Endothelial cell of umbilical vein (primary cell): ENCODE measurements at regions of chr6 and their contacts with region 1.

Region 1: DNA sequence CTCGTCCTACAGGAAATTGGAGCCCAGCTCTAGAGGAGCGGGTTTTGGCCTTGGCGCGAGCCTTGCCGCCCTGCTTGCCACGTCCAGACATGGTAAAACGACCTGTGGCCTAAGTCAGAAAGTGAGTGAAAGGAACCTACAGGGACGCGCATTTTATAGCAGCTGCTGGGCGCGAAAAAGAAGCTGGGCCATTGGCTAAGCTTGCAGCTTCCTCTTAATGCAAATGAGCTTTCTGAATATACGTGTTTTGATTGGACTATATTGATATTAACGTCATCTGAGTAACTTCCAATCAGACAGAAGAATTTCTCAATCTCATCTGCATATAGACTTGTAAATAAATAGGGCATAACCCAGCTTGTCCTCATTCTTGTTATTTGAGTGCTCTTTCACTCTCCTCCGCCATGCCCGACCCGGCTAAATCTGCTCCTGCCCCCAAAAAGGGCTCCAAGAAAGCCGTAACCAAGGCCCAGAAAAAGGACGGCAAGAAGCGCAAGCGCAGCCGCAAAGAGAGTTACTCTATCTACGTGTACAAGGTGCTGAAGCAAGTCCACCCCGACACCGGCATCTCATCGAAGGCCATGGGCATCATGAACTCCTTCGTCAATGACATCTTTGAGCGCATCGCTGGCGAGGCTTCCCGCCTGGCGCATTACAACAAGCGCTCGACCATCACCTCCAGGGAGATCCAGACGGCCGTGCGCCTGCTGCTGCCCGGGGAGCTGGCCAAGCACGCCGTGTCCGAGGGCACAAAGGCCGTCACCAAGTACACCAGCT is 18.9 kb downstream of the OR2B2 start:
- DNase-seq: peak; percentile 98
- H3K4me3 ChIP-seq: peak overlapping the region; percentile 65 to 98 (median 86)
- H3K27ac ChIP-seq: peak overlapping the region; percentile 94
- H3K4me1 ChIP-seq: peaks cover 22% of the 10 kb centered on the region
- H3K27me3 ChIP-seq: no peaks in the 10 kb centered on the region
- CTCF ChIP-seq: no peak
- POLR2A ChIP-seq: peak; percentile 96

Region 2: GRCh38 chr6:27132532-27133280 is 760.5 kb before region 1 on chr6:
- CTCF ChIA-PET with region 1: interaction called, 18 read pairs
- POLR2A ChIA-PET with region 1: interaction called, 11 read pairs
- dilution Hi-C with region 1: no loop called
- intact Hi-C with region 1: loop called (anchors 1 kb)
- DNase-seq: peak; percentile 100
- H3K4me3 ChIP-seq: peak overlapping the region; percentile 37 to 81 (median 59)
- H3K27ac ChIP-seq: peak overlapping the region; percentile 86
- H3K4me1 ChIP-seq: peaks cover 19% of the 10 kb centered on the region
- H3K27me3 ChIP-seq: no peaks in the 10 kb centered on the region
- CTCF ChIP-seq: no peak
- POLR2A ChIP-seq: peak; percentile 76

Region 3: GRCh38 chr6:27188885-27189418 is 704.3 kb before region 1 on chr6:
- CTCF ChIA-PET with region 1: interaction called, 9 read pairs
- POLR2A ChIA-PET with region 1: no interaction called
- dilution Hi-C with region 1: no loop called
- intact Hi-C with region 1: loop called (anchors 1 kb)
- DNase-seq: peak; percentile 83
- H3K4me3 ChIP-seq: peak overlapping the region; percentile 59 to 80 (median 66)
- H3K27ac ChIP-seq: peak overlapping the region; percentile 37
- H3K4me1 ChIP-seq: no peaks in the 10 kb centered on the region
- H3K27me3 ChIP-seq: peaks cover 0 to 4% of the 10 kb centered on the region in 2 experiments
- CTCF ChIP-seq: peak; percentile 54 to 55
- POLR2A ChIP-seq: no peak

Region 4: GRCh38 chr6:27753668-27754407 is 139.4 kb before region 1 on chr6:
- CTCF ChIA-PET with region 1: interaction called, 31 read pairs
- POLR2A ChIA-PET with region 1: interaction called, 5 read pairs
- dilution Hi-C with region 1: no loop called
- intact Hi-C with region 1: loop called (anchors 1 kb)
- DNase-seq: peak; percentile 37
- H3K4me3 ChIP-seq: peak overlapping the region; percentile 31 to 61 (median 38)
- H3K27ac ChIP-seq: no peak overlapping the region
- H3K4me1 ChIP-seq: peaks cover 5% of the 10 kb centered on the region
- H3K27me3 ChIP-seq: peaks cover 35 to 36% of the 10 kb centered on the region in 2 experiments
- CTCF ChIP-seq: no peak
- POLR2A ChIP-seq: no peak

Region 5: GRCh38 chr6:27825025-27825793 is 68.0 kb before region 1 on chr6:
- CTCF ChIA-PET with region 1: interaction called, 117 read pairs
- POLR2A ChIA-PET with region 1: interaction called, 28 read pairs
- dilution Hi-C with region 1: loop called (anchors 5 kb)
- intact Hi-C with region 1: no loop called
- DNase-seq: peak; percentile 49
- H3K4me3 ChIP-seq: peak overlapping the region; percentile 44 to 97 (median 73)
- H3K27ac ChIP-seq: peak overlapping the region; percentile 91
- H3K4me1 ChIP-seq: peaks cover 8% of the 10 kb centered on the region
- H3K27me3 ChIP-seq: no peaks in the 10 kb centered on the region
- CTCF ChIP-seq: no peak
- POLR2A ChIP-seq: no peak

Region 6: GRCh38 chr6:28060405-28060804 is 167.2 kb after region 1 on chr6:
- CTCF ChIA-PET with region 1: no interaction called
- POLR2A ChIA-PET with region 1: no interaction called
- dilution Hi-C with region 1: no loop called
- intact Hi-C with region 1: no loop called
- DNase-seq: no peak
- H3K4me3 ChIP-seq: no peak overlapping the region
- H3K27ac ChIP-seq: no peak overlapping the region
- H3K4me1 ChIP-seq: no peaks in the 10 kb centered on the region
- H3K27me3 ChIP-seq: no peaks in the 10 kb centered on the region
- CTCF ChIP-seq: no peak
- POLR2A ChIP-seq: no peak

Region 7: GRCh38 chr6:28212510-28213212 is 319.4 kb after region 1 on chr6:
- CTCF ChIA-PET with region 1: no interaction called
- POLR2A ChIA-PET with region 1: no interaction called
- dilution Hi-C with region 1: no loop called
- intact Hi-C with region 1: loop called (anchors 2 kb)
- DNase-seq: peak; percentile 90
- H3K4me3 ChIP-seq: peak overlapping the region; percentile 31 to 69 (median 62)
- H3K27ac ChIP-seq: no peak overlapping the region
- H3K4me1 ChIP-seq: peaks cover 14% of the 10 kb centered on the region
- H3K27me3 ChIP-seq: peaks cover 31 to 67% of the 10 kb centered on the region in 2 experiments
- CTCF ChIP-seq: no peak
- POLR2A ChIP-seq: no peak